Breast epithelium (tissue), 4 donors: ENCODE measurements at regions of chr12 and their contacts with region 1.

Region 1: DNA sequence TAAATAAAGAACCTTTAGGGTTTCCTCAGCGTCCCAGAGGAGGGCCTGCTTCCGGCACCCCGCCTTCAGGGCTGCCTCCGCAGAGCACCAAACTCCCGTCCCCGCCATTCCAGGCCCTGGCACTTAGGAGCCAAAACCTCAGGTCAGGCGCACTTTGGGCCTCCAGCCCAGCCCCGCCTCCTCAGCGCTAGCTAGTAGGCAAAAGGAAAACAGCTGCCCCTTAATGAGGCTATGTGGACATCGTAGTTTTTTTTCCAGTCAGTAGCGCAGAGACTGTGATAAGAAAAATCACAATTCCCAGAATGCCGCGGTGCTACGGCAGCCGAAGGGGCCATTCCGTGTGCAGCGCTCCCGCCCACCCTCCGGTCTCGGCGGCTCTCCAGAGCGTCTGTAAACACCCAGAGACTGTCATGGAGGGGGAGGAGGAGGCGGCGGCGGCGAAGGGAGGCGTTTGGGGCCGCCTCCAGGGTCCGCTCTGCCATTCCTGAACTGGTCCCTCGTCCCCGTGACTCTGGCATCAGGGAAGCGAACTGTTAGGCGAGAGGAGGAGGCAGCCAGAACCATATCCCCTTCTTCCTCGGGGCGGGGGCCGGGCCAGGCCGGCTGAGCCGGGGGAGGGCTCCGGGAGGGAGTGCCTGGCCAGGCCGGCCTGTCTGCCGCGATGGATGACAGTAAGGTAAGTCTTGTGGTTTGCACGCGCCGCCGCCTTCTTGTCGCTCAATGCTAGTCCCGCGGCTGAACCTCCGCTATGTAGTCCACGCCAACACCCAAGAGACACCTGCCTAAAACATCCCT is at the start of gene CREBL2:
- DNase-seq: peak; percentile 89 to 94
- H3K4me3 ChIP-seq: peak within 1 kb of the TSS; percentile 69 to 83 (median 77)
- H3K27ac ChIP-seq: peak within 1 kb of the TSS; percentile 98
- H3K4me1 ChIP-seq: peaks cover 3 to 11% of the 10 kb centered on the region in 2 donors
- H3K27me3 ChIP-seq: no peaks in the 10 kb centered on the region
- CTCF ChIP-seq: no peak
- POLR2A ChIP-seq: peak; percentile 56
- total RNA-seq, gene CREBL2: 55.7 to 87.4 (median 84.2) TPM

Region 2: GRCh38 chr12:12630850-12631249 is 19.1 kb after region 1 on chr12:
- intact Hi-C with region 1: loop called (anchors 2 kb)
- DNase-seq: no peak
- H3K4me3 ChIP-seq: no peak overlapping the region
- H3K27ac ChIP-seq: no peak overlapping the region
- H3K4me1 ChIP-seq: no peaks in the 10 kb centered on the region
- H3K27me3 ChIP-seq: no peaks in the 10 kb centered on the region
- CTCF ChIP-seq: no peak
- POLR2A ChIP-seq: no peak